ENCODE measurements at regions of chr1 and their contacts with region 1.

Region 1: GRCh38 chr1:2227346-2228153 is 569 bp upstream of the SKI start:
- DNase-seq: peak; percentile 98
- ATAC-seq: peak; percentile 94
- H3K4me3 Mint-ChIP-seq: peak overlapping the region; percentile 32
- H3K27ac Mint-ChIP-seq: no peak overlapping the region
- H3K4me1 Mint-ChIP-seq: peaks cover 6% of the 10 kb centered on the region
- H3K27me3 Mint-ChIP-seq: no peaks in the 10 kb centered on the region

Region 2: GRCh38 chr1:2205191-2205952 is 22.2 kb before region 1 on chr1:
- CTCF ChIA-PET with region 1: interaction called, 3 read pairs
- POLR2A ChIA-PET with region 1: no interaction called
- intact Hi-C with region 1: loop called (anchors 1 kb)
- DNase-seq: peak; percentile 98
- ATAC-seq: peak; percentile 88
- H3K4me3 Mint-ChIP-seq: peak overlapping the region; percentile 51
- H3K27ac Mint-ChIP-seq: no peak overlapping the region
- H3K4me1 Mint-ChIP-seq: peaks cover 3% of the 10 kb centered on the region
- H3K27me3 Mint-ChIP-seq: no peaks in the 10 kb centered on the region

Region 3: GRCh38 chr1:2255420-2256369 is 28.1 kb after region 1 on chr1:
- CTCF ChIA-PET with region 1: interaction called, 3 read pairs
- POLR2A ChIA-PET with region 1: interaction called, 4 read pairs
- intact Hi-C with region 1: loop called in 1 of 2 experiments (anchors 1 kb)
- DNase-seq: peak; percentile 87
- ATAC-seq: peak; percentile 71
- H3K4me3 Mint-ChIP-seq: no peak overlapping the region
- H3K27ac Mint-ChIP-seq: no peak overlapping the region
- H3K4me1 Mint-ChIP-seq: peaks cover 54% of the 10 kb centered on the region
- H3K27me3 Mint-ChIP-seq: no peaks in the 10 kb centered on the region

Region 4: GRCh38 chr1:2314803-2315673 is 87.5 kb after region 1 on chr1:
- CTCF ChIA-PET with region 1: interaction called, 3 read pairs
- POLR2A ChIA-PET with region 1: interaction called, 4 read pairs
- intact Hi-C with region 1: loop called in 1 of 2 experiments (anchors 1 kb)
- DNase-seq: peak; percentile 71
- ATAC-seq: peak; percentile 20
- H3K4me3 Mint-ChIP-seq: peak overlapping the region; percentile 21
- H3K27ac Mint-ChIP-seq: peak overlapping the region; percentile 58
- H3K4me1 Mint-ChIP-seq: peaks cover 9% of the 10 kb centered on the region
- H3K27me3 Mint-ChIP-seq: no peaks in the 10 kb centered on the region

Region 5: GRCh38 chr1:2381741-2382620 is 154.4 kb after region 1 on chr1:
- CTCF ChIA-PET with region 1: interaction called, 16 read pairs
- POLR2A ChIA-PET with region 1: no interaction called
- intact Hi-C with region 1: loop called (anchors 1 to 5 kb)
- DNase-seq: peak; percentile 90
- ATAC-seq: peak; percentile 97
- H3K4me3 Mint-ChIP-seq: no peak overlapping the region
- H3K27ac Mint-ChIP-seq: no peak overlapping the region
- H3K4me1 Mint-ChIP-seq: no peaks in the 10 kb centered on the region
- H3K27me3 Mint-ChIP-seq: no peaks in the 10 kb centered on the region

Region 6: GRCh38 chr1:2525920-2526823 is 298.6 kb after region 1 on chr1 and contains the start of gene PANK4:
- CTCF ChIA-PET with region 1: no interaction called
- POLR2A ChIA-PET with region 1: interaction called, 4 read pairs
- intact Hi-C with region 1: loop called in 1 of 2 experiments (anchors 1 kb)
- DNase-seq: peak; percentile 96
- ATAC-seq: peak; percentile 87
- H3K4me3 Mint-ChIP-seq: peak within 1 kb of the TSS; percentile 77
- H3K27ac Mint-ChIP-seq: peak within 1 kb of the TSS; percentile 91
- H3K4me1 Mint-ChIP-seq: peaks cover 43% of the 10 kb centered on the region
- H3K27me3 Mint-ChIP-seq: peaks cover 3% of the 10 kb centered on the region
- total RNA-seq, gene PANK4: 32.4 to 39.2 TPM